Heart left ventricle (tissue), 16 donors: ENCODE measurements at regions of chr10 and their contacts with region 1.

Region 1: DNA sequence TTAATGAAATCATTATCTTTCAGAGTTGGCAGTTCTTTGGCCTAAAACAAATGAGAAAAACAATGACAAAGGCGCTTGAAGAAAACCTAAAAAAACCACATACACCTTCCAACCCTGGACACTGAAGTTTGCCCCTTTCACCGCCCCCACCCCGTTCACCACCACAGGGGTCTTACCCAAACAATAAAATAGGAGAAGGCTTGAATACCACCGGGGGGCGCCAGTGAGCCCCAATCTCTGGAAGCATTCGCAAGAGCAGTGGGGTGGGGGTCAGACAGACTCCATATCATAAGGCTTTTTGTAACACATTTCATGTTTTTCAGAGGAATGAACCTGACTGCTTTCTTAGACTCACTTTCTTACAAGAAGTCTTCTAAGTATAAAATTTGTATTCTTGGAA is 163.6 kb downstream of the PIP4K2A start:
- DNase-seq: peak in 4 of 5 donors; percentile 25 to 74 (median 39)
- ATAC-seq: no peak
- H3K4me3 ChIP-seq: no peak overlapping the region
- H3K27ac ChIP-seq: no peak overlapping the region
- H3K4me1 ChIP-seq: peaks cover 0 to 13% (median 0%) of the 10 kb centered on the region in 12 donors
- H3K27me3 ChIP-seq: no peaks in the 10 kb centered on the region
- CTCF ChIP-seq: peak; percentile 36 to 63 (median 54)
- POLR2A ChIP-seq: no peak

Region 2: GRCh38 chr10:22340362-22341189 is 210.2 kb before region 1 on chr10:
- intact Hi-C with region 1: loop called in 1 of 10 experiments (anchors 10 kb)
- DNase-seq: peak; percentile 69 to 84 (median 72)
- ATAC-seq: peak; percentile 68 to 87 (median 86)
- H3K4me3 ChIP-seq: peak overlapping the region; percentile 62 to 94 (median 81)
- H3K27ac ChIP-seq: peak overlapping the region; percentile 81 to 97 (median 92)
- H3K4me1 ChIP-seq: peaks cover 8 to 37% (median 18%) of the 10 kb centered on the region in 12 donors
- H3K27me3 ChIP-seq: peaks cover 66 to 91% (median 84%) of the 10 kb centered on the region in 9 donors
- CTCF ChIP-seq: no peak
- POLR2A ChIP-seq: peak in 1 of 2 donors; percentile 57

Region 3: GRCh38 chr10:22666287-22667092 is 115.8 kb after region 1 on chr10:
- intact Hi-C with region 1: no loop called
- DNase-seq: no peak
- ATAC-seq: peak in 3 of 4 donors; percentile 51 to 60 (median 59)
- H3K4me3 ChIP-seq: peak overlapping the region in 1 of 12 donors; percentile 29
- H3K27ac ChIP-seq: peak overlapping the region in 1 of 12 donors; percentile 14
- H3K4me1 ChIP-seq: peaks cover 0 to 77% (median 9%) of the 10 kb centered on the region in 12 donors
- H3K27me3 ChIP-seq: no peaks in the 10 kb centered on the region
- CTCF ChIP-seq: no peak
- POLR2A ChIP-seq: no peak